ENCODE measurements at regions of chr12 and their contacts with region 1.

Region 1: GRCh38 chr12:27779920-27780611 is at the starts of genes KLHL42 and MANSC4:
- DNase-seq: peak; percentile 40 to 81 (median 60)
- H3K4me3 ChIP-seq: peak within 1 kb of the TSS; percentile 52 to 95 (median 85)
- H3K27ac ChIP-seq: peak within 1 kb of the TSS; percentile 78 to 99 (median 96)
- H3K27me3 ChIP-seq: no peaks in the 10 kb centered on the region
- CTCF ChIP-seq: peak in 14 of 56 donors; percentile 9 to 35 (median 24)
- total RNA-seq, gene KLHL42: 40.7 to 73.4 (median 58.0) TPM
- total RNA-seq, gene MANSC4: 0.42 to 1.2 (median 0.61) TPM in 14 of 120 experiments, not detected in the others

Region 2: GRCh38 chr12:27602516-27602915 is 177.6 kb before region 1 on chr12:
- intact Hi-C with region 1: no loop called
- DNase-seq: no peak
- H3K4me3 ChIP-seq: no peak overlapping the region
- H3K27ac ChIP-seq: peak overlapping the region in 2 of 59 donors; percentile 18 to 41
- H3K27me3 ChIP-seq: no peaks in the 10 kb centered on the region
- CTCF ChIP-seq: no peak

Region 3: DNA sequence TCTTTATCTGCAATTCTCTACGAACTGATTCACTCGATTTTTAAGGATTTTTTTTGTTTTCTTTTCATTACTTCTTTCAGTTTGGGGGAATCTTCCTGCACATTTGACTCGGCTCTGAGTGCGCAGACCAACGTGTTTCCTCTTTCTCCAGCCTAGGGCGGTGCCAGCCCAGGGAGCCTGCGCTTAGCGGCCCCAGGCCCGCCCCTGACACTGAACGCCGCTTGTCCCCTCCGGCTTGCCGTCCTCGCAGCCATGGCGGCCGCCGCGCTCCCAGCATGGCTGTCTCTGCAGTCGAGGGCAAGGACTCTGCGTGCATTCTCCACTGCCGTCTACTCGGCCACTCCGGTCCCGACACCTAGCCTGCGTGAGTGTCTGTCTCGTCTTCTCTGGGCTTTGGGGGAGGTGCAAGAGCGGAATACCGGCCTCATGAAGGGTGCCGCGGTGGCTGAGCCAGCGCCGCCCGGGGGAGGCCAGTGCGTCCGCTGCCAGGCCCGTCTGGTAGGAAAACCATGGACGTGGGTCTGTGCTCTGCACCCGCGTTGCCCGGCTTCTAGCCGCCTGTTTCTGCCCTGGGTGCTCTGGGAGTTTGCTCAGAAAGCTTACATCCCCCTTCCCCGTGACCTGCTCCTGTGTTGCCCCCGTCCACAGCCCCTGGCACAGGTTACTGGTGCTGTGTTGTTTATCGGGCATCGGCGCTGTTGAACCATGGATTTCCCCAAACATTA is 69.3 kb before region 1 on chr12 and contains the start of gene MRPS35:
- intact Hi-C with region 1: loop called (anchors 2 kb)
- DNase-seq: peak; percentile 84 to 94 (median 86)
- H3K4me3 ChIP-seq: peak within 1 kb of the TSS; percentile 62 to 100 (median 92)
- H3K27ac ChIP-seq: peak within 1 kb of the TSS; percentile 16 to 92 (median 79)
- H3K27me3 ChIP-seq: no peaks in the 10 kb centered on the region
- CTCF ChIP-seq: peak in 36 of 56 donors; percentile 10 to 65 (median 34)
- total RNA-seq, gene MRPS35: 35.5 to 83.3 (median 51.5) TPM

Region 4: DNA sequence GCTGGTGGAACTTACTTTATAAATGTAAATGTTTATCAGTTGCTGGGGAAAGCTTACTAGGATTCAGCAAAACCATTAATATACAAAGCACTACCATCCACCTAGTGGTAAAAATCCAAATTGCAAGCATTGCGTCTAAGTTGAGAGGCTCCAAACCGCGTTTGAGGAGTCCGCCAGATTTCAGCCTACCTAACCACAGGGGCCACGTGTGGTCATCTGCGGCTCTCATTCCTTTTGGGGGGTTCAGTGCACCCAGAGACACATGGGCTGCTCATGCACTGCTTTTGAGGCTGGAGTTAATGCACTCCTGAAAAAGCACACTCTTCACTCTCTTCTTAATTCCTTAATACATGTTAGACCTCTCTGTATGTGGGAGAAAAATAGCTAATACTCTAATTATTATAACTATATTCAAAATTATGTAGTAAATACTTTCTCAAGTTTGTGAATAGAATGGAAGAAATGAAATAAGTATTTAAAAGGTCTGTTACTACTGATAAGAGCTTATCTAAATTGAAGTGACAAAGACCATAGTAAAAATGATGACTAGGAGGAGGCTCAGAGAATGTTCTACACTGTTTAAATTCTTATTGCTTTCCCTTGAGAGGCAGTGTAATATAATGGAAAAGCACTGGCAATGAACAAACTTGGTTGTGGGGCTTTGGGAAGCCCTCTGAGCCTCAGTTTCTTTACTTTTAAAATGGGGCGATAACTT is 41.4 kb after region 1 on chr12:
- intact Hi-C with region 1: loop called in 1 of 2 experiments (anchors 5 kb)
- DNase-seq: peak in 1 of 10 donors; percentile 14
- H3K4me3 ChIP-seq: peak overlapping the region in 13 of 59 donors; percentile 2 to 49 (median 25)
- H3K27ac ChIP-seq: no peak overlapping the region
- H3K27me3 ChIP-seq: no peaks in the 10 kb centered on the region
- CTCF ChIP-seq: peak; percentile 65 to 91 (median 82)

Region 5: GRCh38 chr12:27975244-27976136 is 195.4 kb after region 1 on chr12:
- intact Hi-C with region 1: no loop called
- DNase-seq: no peak
- H3K4me3 ChIP-seq: peak overlapping the region in 24 of 59 donors; percentile 6 to 44 (median 26)
- H3K27ac ChIP-seq: no peak overlapping the region
- H3K27me3 ChIP-seq: peaks cover 2 to 82% (median 54%) of the 10 kb centered on the region in 45 donors
- CTCF ChIP-seq: no peak

Region 6: GRCh38 chr12:28017126-28017872 is 237.2 kb after region 1 on chr12:
- intact Hi-C with region 1: no loop called
- DNase-seq: no peak
- H3K4me3 ChIP-seq: no peak overlapping the region
- H3K27ac ChIP-seq: no peak overlapping the region
- H3K27me3 ChIP-seq: peaks cover 0 to 12% (median 0%) of the 10 kb centered on the region in 45 donors
- CTCF ChIP-seq: no peak